ENCODE measurements at regions of chr3 and their contacts with region 1.

Region 1: GRCh38 chr3:39406368-39407258 is at the start of gene RPSA:
- DNase-seq: peak; percentile 94
- H3K4me3 ChIP-seq: peak within 1 kb of the TSS; percentile 72
- H3K27ac ChIP-seq: peak within 1 kb of the TSS; percentile 88
- H3K4me1 ChIP-seq: no peaks in the 10 kb centered on the region
- H3K27me3 ChIP-seq: no peaks in the 10 kb centered on the region
- CTCF ChIP-seq: peak; percentile 15; the same call in 1 of the 2 replicates
- total RNA-seq, gene RPSA: 944 and 994 TPM in 2 replicates

Region 2: GRCh38 chr3:39241561-39241960 is 165.1 kb before region 1 on chr3:
- CTCF ChIA-PET with region 1: no interaction called
- POLR2A ChIA-PET with region 1: no interaction called
- intact Hi-C with region 1: no loop called
- DNase-seq: no peak
- H3K4me3 ChIP-seq: no peak overlapping the region
- H3K27ac ChIP-seq: no peak overlapping the region
- H3K4me1 ChIP-seq: no peaks in the 10 kb centered on the region
- H3K27me3 ChIP-seq: peaks cover 3% of the 10 kb centered on the region
- CTCF ChIP-seq: no peak

Region 3: DNA sequence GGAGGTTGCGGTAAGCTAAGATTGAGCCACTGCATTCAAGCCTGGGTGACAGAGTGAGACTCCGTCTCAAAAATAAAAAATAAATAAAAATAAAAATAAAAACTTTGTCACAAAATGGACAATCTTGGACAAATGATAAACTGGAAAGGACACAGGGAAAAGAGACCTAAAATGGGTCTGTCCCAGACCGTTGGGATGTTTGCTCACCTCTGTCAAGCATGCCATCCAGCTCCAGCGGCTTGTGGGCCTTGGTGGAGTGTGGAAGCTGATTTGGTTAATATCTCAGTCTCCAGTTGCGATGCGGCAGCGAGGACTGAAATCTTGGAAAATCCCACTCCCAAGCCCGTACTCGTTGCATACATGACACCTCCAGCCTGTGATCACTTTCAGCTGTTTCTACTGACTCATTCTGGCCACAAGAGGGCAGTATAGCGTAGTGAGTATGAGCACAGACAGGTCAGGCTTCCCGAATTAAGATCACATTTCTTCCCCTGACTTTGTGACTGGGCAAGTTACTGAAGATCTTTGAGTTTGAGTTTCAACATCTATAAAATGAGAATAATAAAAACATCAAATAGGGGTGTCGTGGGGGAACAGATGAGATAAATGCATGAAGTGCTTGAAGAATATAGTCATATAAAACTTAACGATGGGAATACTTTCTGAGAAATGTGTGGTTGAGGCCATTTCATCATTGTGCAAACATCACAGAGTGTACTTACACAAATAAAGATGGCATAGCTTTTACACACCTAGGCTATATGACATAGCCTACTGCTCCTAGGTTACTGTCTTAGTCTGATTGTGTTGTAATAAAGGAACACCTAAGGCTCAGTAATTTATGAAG is 41.2 kb after region 1 on chr3:
- CTCF ChIA-PET with region 1: interaction called, 12 read pairs
- POLR2A ChIA-PET with region 1: interaction called, 3 read pairs
- intact Hi-C with region 1: no loop called
- DNase-seq: peak; percentile 75
- H3K4me3 ChIP-seq: no peak overlapping the region
- H3K27ac ChIP-seq: no peak overlapping the region
- H3K4me1 ChIP-seq: no peaks in the 10 kb centered on the region
- H3K27me3 ChIP-seq: no peaks in the 10 kb centered on the region
- CTCF ChIP-seq: peak; percentile 69